WTC11 (cell line): ENCODE measurements at regions of chr11 and their contacts with region 1.

Region 1: GRCh38 chr11:2420502-2421225 is 20.1 kb downstream of the TSSC4 start:
- DNase-seq: peak; percentile 84
- ATAC-seq: peak; percentile 94
- H3K4me3 Mint-ChIP-seq: no peak overlapping the region
- H3K27ac Mint-ChIP-seq: no peak overlapping the region
- H3K4me1 Mint-ChIP-seq: no peaks in the 10 kb centered on the region
- H3K27me3 Mint-ChIP-seq: peaks cover 4% of the 10 kb centered on the region
- CTCF ChIP-seq: peak; percentile 78

Region 2: GRCh38 chr11:2166091-2166851 is 254.4 kb before region 1 on chr11:
- CTCF ChIA-PET with region 1: interaction called, 12 read pairs
- POLR2A ChIA-PET with region 1: no interaction called
- DNase-seq: peak; percentile 75
- ATAC-seq: peak; percentile 76
- H3K4me3 Mint-ChIP-seq: no peak overlapping the region
- H3K27ac Mint-ChIP-seq: no peak overlapping the region
- H3K4me1 Mint-ChIP-seq: no peaks in the 10 kb centered on the region
- H3K27me3 Mint-ChIP-seq: no peaks in the 10 kb centered on the region
- CTCF ChIP-seq: no peak; the same call in 1 of the 2 replicates

Region 3: DNA sequence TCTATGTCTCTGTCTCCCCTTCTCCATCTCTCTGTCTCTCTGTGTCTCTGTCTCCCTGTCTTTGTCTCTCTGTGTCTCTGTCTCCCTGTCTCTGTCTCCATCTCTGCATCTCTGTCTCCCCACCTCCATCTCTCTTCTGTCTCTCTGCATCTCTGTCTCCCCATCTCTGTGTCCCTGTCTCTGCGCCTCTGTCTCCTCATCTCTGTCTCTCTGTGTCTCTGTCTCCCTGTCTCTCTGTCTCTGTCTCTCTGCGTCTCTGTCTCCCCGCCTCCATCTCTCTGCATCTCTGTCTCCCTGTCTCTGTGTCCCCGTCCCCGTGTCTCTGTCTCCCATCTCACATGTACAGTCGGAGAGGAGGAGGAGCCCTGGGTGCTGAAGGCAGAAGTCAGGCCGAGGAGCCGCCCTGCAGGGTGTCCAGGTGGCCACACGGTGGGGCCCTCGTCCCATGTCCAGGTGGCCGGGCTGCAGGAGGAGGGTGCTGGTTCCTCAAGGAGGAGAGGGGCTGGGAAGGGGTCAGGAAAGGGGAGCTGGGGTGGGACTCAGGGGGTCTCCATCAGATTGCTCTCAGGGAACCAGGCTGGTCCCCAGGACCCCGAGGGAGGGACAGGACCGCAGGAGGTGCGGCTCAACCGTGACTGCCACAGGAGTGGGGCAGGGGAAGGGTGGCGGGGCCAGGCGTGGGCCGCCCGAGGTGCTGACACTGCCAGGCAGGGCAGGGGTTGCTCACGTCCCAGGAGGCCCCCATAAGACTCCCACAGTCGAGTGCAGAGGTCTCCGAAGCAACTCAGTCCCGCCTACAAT is 223.5 kb before region 1 on chr11:
- CTCF ChIA-PET with region 1: interaction called, 25 read pairs
- POLR2A ChIA-PET with region 1: no interaction called
- DNase-seq: peak; percentile 87
- ATAC-seq: peak; percentile 87
- H3K4me3 Mint-ChIP-seq: no peak overlapping the region
- H3K27ac Mint-ChIP-seq: no peak overlapping the region
- H3K4me1 Mint-ChIP-seq: no peaks in the 10 kb centered on the region
- H3K27me3 Mint-ChIP-seq: peaks cover 13% of the 10 kb centered on the region
- CTCF ChIP-seq: peak; percentile 56; the same call in 1 of the 2 replicates

Region 4: GRCh38 chr11:2377511-2378443 is 42.9 kb before region 1 on chr11:
- CTCF ChIA-PET with region 1: interaction called, 23 read pairs
- POLR2A ChIA-PET with region 1: no interaction called
- DNase-seq: peak; percentile 65
- ATAC-seq: peak; percentile 25
- H3K4me3 Mint-ChIP-seq: peak overlapping the region; percentile 87
- H3K27ac Mint-ChIP-seq: no peak overlapping the region; the same call in 1 of the 2 replicates
- H3K4me1 Mint-ChIP-seq: peaks cover 18% of the 10 kb centered on the region
- H3K27me3 Mint-ChIP-seq: peaks cover 6% of the 10 kb centered on the region
- CTCF ChIP-seq: no peak

Region 5: GRCh38 chr11:2400069-2400760 is 20.4 kb before region 1 on chr11 and contains the start of gene TSSC4:
- CTCF ChIA-PET with region 1: interaction called, 81 read pairs
- POLR2A ChIA-PET with region 1: interaction called, 4 read pairs
- DNase-seq: peak; percentile 98
- ATAC-seq: peak; percentile 90
- H3K4me3 Mint-ChIP-seq: peak within 1 kb of the TSS; percentile 83
- H3K27ac Mint-ChIP-seq: 0 out of 2 replicates have a peak within 1 kb of the TSS, but pooled peaks have one; percentile 63
- H3K4me1 Mint-ChIP-seq: peaks cover 5% of the 10 kb centered on the region; the same call in 1 of the 2 replicates
- H3K27me3 Mint-ChIP-seq: no peaks in the 10 kb centered on the region
- CTCF ChIP-seq: peak; percentile 86
- total RNA-seq, gene TSSC4: 41.2 to 45.8 TPM (median 41.4 TPM) in 3 replicates

Region 6: GRCh38 chr11:2526808-2527381 is 106.2 kb after region 1 on chr11:
- CTCF ChIA-PET with region 1: interaction called, 122 read pairs
- POLR2A ChIA-PET with region 1: no interaction called
- DNase-seq: peak; percentile 48
- ATAC-seq: peak; percentile 36
- H3K4me3 Mint-ChIP-seq: no peak overlapping the region
- H3K27ac Mint-ChIP-seq: peak overlapping the region; percentile 53; the same call in 1 of the 2 replicates
- H3K4me1 Mint-ChIP-seq: no peaks in the 10 kb centered on the region
- H3K27me3 Mint-ChIP-seq: peaks cover 39% of the 10 kb centered on the region
- CTCF ChIP-seq: no peak